Activated naive CD4-positive, alpha-beta T cell treated with anti-CD3 and anti-CD28 coated beads for 36 hours (primary cell): ENCODE measurements at regions of chr3 and their contacts with region 1.

Region 1: GRCh38 chr3:138329127-138329983 is at the start of gene NME9:
- DNase-seq: peak; percentile 92
- H3K4me3 Mint-ChIP-seq: peak within 1 kb of the TSS; percentile 91
- H3K27ac Mint-ChIP-seq: peak within 1 kb of the TSS; percentile 86
- H3K4me1 Mint-ChIP-seq: peaks cover 47% of the 10 kb centered on the region
- H3K27me3 Mint-ChIP-seq: no peaks in the 10 kb centered on the region
- total RNA-seq, gene NME9: 2.0 to 2.4 TPM

Region 2: DNA sequence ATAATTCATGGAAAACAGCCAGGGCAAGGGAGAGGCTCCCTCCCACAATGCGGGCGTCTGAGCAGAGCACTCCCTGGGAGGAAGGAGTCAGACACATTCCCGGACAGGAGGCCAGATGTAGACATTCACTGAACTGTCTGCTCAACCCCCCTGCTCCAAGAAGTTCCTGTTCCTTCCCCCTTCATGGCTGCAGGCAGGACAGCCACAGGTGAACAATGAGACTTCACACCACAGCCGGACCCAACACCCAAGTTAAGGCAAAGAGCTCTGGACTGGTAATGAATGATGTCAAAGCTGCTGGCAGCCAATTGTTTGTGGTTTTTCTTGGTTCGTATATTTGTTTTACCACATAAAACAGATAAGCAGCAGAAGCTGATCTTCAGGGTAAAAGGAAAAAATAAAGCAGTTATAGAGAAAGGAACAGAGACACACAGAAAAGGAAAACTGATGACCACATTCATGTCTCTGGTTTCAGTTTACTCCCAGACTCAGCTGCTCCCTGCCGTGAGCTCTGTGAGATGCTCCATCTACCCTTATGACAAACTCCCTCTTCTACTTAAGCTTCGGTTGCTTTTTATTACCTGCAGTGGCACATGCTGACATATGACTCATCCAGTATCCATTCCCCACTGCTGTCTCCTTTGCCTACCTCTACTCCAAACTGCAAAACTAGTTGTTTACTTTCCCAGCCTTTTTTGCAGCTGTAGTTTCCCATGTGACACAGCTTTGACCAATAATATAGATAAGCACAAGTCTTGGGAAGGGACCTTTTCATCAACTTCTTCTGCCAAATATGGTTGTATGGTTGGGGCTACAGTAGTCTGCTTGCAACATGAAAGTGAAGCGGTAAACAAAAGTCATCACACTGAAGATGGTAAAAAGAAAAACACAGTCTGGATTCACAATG is 247.0 kb before region 1 on chr3:
- CTCF ChIA-PET with region 1: no interaction called
- intact Hi-C with region 1: loop called (anchors 5 kb)
- DNase-seq: peak; percentile 29
- H3K4me3 Mint-ChIP-seq: peak overlapping the region; percentile 36
- H3K27ac Mint-ChIP-seq: peak overlapping the region; percentile 63
- H3K4me1 Mint-ChIP-seq: peaks cover 29% of the 10 kb centered on the region
- H3K27me3 Mint-ChIP-seq: peaks cover 9% of the 10 kb centered on the region

Region 3: GRCh38 chr3:138186803-138187295 is 142.5 kb before region 1 on chr3:
- CTCF ChIA-PET with region 1: interaction called, 10 read pairs
- intact Hi-C with region 1: loop called (anchors 1 kb)
- DNase-seq: peak; percentile 91
- H3K4me3 Mint-ChIP-seq: peak overlapping the region; percentile 95
- H3K27ac Mint-ChIP-seq: peak overlapping the region; percentile 92
- H3K4me1 Mint-ChIP-seq: peaks cover 27% of the 10 kb centered on the region
- H3K27me3 Mint-ChIP-seq: peaks cover 1% of the 10 kb centered on the region

Region 4: DNA sequence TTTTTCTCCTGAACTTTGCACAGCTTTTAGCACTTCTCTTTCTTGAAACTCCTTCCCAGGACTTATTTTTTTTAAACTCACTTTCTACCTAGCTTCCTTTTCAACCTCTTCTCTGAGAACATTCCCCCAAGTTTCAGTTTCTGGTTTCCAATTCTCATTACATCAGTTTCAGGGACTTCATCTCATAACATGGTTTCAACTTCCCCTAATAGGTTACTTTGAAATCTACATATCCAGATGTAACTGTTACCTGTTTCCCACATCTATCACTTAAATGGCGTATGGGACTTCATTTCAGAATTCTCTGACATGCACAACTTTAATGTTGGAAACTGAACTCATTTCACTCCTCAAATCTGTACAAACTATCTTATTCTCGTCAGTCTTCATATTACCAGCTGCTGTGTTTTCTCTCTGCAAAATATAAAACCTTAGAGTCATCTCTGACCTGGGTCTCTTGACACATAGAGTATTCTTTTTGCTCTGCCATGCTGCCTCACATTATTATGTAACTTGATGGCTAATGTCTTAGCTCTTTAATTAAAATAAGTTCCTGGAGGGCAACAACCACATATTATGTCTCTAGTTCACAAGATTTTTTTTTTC is 58.1 kb before region 1 on chr3:
- CTCF ChIA-PET with region 1: interaction called, 4 read pairs
- intact Hi-C with region 1: loop called (anchors 1 kb)
- DNase-seq: no peak
- H3K4me3 Mint-ChIP-seq: no peak overlapping the region
- H3K27ac Mint-ChIP-seq: peak overlapping the region; percentile 67
- H3K4me1 Mint-ChIP-seq: peaks cover 11% of the 10 kb centered on the region
- H3K27me3 Mint-ChIP-seq: no peaks in the 10 kb centered on the region

Region 5: GRCh38 chr3:138397983-138398382 is 68.6 kb after region 1 on chr3:
- CTCF ChIA-PET with region 1: no interaction called
- intact Hi-C with region 1: loop called (anchors 2 kb)
- DNase-seq: peak; percentile 9
- H3K4me3 Mint-ChIP-seq: no peak overlapping the region
- H3K27ac Mint-ChIP-seq: no peak overlapping the region
- H3K4me1 Mint-ChIP-seq: no peaks in the 10 kb centered on the region
- H3K27me3 Mint-ChIP-seq: peaks cover 3% of the 10 kb centered on the region

Region 6: GRCh38 chr3:138834359-138835212 is 505.2 kb after region 1 on chr3 and contains the start of gene PIK3CB:
- CTCF ChIA-PET with region 1: no interaction called
- intact Hi-C with region 1: loop called (anchors 10 kb)
- DNase-seq: peak; percentile 89
- H3K4me3 Mint-ChIP-seq: peak within 1 kb of the TSS; percentile 98
- H3K27ac Mint-ChIP-seq: peak within 1 kb of the TSS; percentile 99
- H3K4me1 Mint-ChIP-seq: peaks cover 29% of the 10 kb centered on the region
- H3K27me3 Mint-ChIP-seq: no peaks in the 10 kb centered on the region
- total RNA-seq, gene PIK3CB: 19.2 to 20.6 TPM